ENCODE measurements at regions of chr3 and their contacts with region 1.

Region 1: DNA sequence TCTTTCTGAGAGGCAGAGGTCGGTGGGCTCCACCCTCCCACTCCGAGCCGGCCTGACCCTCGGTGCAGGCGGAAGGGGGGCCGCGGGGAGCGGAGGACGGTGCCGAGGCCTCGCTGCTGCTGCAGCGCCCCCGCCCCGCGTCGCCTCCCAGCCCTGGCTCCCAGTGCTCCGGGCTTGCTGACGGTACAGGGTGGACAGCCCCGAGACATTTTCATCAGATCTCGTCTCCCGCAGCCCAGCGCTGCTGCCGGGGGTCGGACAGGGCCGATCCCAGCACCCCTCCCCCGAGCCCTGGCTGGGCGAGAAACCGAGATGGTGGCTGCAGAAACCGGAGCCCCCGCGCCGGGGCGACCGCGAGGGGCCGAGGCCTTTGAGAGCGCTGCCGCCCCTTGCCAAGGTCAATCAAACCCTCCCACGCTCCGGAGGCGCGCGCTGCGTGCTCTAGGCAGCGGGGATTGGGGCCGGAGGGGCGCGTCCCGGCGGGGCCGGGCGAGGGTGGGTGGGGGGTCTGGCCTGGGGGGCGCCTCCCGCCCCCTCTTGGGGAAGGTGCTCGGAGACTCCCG is 42.5 kb downstream of the EPHB3 start:
- DNase-seq: no peak
- H3K4me3 Mint-ChIP-seq: no peak overlapping the region
- H3K27ac Mint-ChIP-seq: no peak overlapping the region
- H3K4me1 Mint-ChIP-seq: peaks cover 29% of the 10 kb centered on the region
- H3K27me3 Mint-ChIP-seq: no peaks in the 10 kb centered on the region
- CTCF ChIP-seq: no peak

Region 2: DNA sequence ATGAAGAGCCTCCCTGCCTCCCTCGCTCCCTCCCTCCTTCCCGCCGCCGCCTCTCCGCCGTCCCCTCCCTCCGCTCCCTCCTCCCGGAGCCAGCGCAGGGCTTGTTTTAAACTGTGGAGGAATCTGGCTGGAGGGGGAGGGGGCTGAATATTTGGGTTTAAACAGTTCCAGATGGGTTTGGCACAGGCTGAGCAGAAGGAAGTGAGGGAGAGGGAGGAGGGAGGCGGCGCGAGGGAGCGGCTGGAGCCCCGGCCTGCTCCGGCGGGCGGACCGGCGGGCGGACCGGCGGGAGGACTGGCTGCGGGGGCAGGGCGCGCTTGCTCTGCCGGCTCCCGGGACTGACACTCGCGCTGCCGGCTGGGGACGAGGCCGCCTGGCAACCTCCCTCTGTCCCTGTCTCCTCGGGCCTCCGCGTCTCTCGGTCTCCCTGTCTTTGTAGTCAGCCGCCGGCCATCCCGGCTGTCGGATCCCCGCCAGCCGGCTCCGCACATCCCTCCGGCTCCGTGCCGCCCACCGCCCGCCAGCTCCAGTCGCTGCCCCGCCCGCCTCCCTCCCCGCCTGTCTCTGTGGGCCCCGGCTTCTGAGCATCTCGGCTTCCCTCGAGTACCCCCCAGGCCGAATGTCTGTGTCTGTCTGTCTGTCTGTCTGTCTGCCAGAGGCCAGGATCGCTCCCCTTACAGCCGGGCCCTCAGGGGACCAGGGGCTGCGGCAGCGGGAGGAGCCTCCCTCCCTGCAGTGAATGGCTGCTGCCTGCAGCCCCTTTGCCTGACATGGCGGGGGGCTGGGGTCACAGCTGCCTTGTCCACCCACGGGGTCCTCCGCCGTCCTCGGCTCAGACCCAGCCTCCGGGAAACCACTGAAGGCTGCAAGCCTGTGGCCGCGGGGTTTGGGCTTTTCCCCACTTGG is 34.9 kb before region 1 on chr3:
- CTCF ChIA-PET with region 1: interaction called, 4 read pairs
- POLR2A ChIA-PET with region 1: interaction called, 15 read pairs
- intact Hi-C with region 1: no loop called
- DNase-seq: peak; percentile 78
- H3K4me3 Mint-ChIP-seq: peak overlapping the region; percentile 73
- H3K27ac Mint-ChIP-seq: no peak overlapping the region
- H3K4me1 Mint-ChIP-seq: peaks cover 32% of the 10 kb centered on the region
- H3K27me3 Mint-ChIP-seq: no peaks in the 10 kb centered on the region
- CTCF ChIP-seq: no peak

Region 3: GRCh38 chr3:184652474-184652873 is 48.4 kb after region 1 on chr3:
- CTCF ChIA-PET with region 1: interaction called, 3 read pairs
- POLR2A ChIA-PET with region 1: interaction called, 16 read pairs
- intact Hi-C with region 1: no loop called
- DNase-seq: peak; percentile 92
- H3K4me3 Mint-ChIP-seq: peak overlapping the region; percentile 20
- H3K27ac Mint-ChIP-seq: peak overlapping the region; percentile 89
- H3K4me1 Mint-ChIP-seq: peaks cover 27% of the 10 kb centered on the region
- H3K27me3 Mint-ChIP-seq: no peaks in the 10 kb centered on the region
- CTCF ChIP-seq: no peak

Region 4: DNA sequence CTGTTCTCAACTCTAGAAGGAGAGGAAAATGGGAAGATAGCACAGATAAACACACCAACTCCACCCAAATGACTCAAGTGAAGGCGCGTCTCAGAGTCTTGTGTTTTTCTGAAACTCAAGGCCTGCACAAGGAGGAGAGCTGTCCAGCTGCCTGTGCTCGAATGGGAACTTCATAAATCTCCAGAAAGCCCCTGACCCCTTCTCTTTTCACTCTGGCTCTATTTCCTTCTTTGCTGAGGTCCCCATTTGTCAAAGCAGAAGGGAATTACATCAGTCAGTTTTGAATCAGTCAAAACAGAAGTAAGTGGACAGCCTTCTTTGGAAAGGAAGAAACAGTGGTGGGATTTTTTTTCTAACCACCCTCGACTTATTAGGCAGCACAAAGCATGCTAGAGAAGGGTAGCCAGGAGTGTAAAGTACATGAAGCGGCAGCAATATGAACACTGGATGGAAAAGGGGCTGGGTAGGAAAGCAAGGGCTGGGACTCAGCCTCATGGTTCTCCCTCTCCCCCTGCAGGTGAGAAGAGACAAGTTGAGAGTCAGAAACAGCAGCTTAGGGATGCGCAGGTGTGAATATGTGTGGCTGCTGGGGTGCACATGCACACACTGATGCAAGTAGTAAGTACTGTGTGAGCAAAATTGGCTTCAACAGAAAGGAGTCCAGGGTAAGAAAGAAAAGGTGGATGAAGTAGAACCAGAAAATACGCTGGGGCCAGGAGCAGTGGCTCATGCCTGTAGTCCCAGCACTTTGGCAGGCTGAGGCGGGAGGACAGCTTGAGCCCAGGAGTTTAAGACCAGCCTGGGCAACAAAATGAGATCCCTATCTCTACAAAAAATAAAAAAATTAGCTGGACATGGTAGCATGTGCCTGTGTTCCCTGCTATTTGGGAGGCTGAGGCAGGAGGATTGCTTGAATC is 144.4 kb after region 1 on chr3:
- CTCF ChIA-PET with region 1: interaction called, 3 read pairs
- POLR2A ChIA-PET with region 1: interaction called, 16 read pairs
- intact Hi-C with region 1: no loop called
- DNase-seq: peak; percentile 73
- H3K4me3 Mint-ChIP-seq: no peak overlapping the region
- H3K27ac Mint-ChIP-seq: no peak overlapping the region
- H3K4me1 Mint-ChIP-seq: peaks cover 18% of the 10 kb centered on the region
- H3K27me3 Mint-ChIP-seq: no peaks in the 10 kb centered on the region
- CTCF ChIP-seq: peak; percentile 60